Heart right ventricle (tissue), 16 donors: ENCODE measurements at regions of chr15 and their contacts with region 1.

Region 1: DNA sequence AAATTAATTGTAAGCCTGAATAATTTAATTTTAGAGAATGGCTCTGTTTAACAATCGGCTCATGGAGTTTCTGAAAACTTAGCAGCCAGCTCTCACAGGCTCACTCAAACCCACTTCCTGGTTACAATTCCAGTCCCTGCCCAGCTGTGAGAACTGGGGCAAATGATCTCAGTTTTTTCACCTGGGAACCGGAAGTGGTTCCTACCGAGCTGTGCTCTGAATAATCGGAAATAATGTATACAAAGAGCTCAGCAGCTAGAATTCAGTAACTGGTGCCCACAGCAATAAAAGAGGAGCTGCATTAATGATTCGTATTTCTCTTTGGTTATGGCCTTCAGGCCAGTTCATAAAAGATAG is 244.3 kb upstream of the MCTP2 start:
- DNase-seq: no peak
- ATAC-seq: no peak
- H3K4me3 ChIP-seq: no peak overlapping the region
- H3K27ac ChIP-seq: peak overlapping the region in 1 of 10 donors; percentile 40
- H3K4me1 ChIP-seq: peaks cover 0 to 22% (median 7%) of the 10 kb centered on the region in 9 donors
- H3K27me3 ChIP-seq: peaks cover 0 to 10% (median 0%) of the 10 kb centered on the region in 7 donors
- CTCF ChIP-seq: no peak

Region 2: DNA sequence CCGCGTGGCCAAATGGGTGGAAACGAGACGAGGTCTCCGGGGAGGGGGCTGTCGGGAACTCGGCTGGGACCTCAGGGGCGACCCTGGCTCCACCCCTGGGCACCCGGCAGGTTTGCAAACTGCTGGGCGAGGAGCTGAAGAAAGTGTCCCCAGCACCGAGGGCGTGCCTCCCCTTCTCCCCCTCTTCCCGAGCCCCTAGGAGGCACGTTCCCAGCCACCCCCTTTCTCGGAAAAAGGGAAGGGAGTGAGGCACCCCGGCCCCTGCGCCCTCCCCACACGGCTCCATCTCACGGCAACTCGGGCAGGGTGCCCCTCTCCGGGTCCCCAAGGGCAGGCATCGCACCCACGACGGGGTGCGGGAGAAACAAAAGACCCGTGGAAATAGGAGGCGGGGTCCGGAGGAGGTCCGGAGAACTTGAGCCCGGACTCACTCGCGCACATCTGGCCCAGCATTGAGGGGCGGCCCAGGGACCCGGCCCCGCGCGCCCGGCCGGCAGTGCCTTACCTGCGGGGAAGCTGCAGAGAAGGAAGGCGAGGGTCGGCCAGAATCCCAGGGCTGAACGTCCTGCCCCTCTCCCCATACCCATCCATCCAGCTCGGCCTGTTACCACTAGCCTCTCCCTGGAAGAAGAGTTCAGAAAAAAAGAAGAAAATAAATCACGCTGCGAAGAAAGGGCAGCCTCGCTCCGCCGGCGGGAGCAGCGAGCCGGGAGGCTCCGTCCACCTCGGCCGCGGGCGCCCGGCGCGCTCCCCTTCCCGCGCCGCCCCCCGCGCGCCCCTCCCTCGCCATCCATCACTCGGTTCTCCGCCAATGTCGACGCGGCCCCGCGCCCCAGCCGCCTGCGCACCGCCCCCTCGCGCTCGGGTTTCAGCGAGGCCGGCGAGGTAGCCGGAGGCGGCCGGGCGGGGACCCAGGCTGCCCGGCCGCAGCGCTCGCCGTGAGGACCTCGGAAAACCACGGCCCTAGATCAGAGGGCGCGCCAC is 914.4 kb before region 1 on chr15:
- intact Hi-C with region 1: loop called in 1 of 10 experiments (anchors 10 kb)
- DNase-seq: peak; percentile 83 to 88
- ATAC-seq: peak; percentile 79 to 94 (median 93)
- H3K4me3 ChIP-seq: peak overlapping the region; percentile 55 to 84 (median 72)
- H3K27ac ChIP-seq: peak overlapping the region; percentile 58 to 89 (median 82)
- H3K4me1 ChIP-seq: peaks cover 0 to 54% (median 19%) of the 10 kb centered on the region in 9 donors
- H3K27me3 ChIP-seq: peaks cover 0 to 55% (median 9%) of the 10 kb centered on the region in 7 donors
- CTCF ChIP-seq: peak in 5 of 9 donors; percentile 7 to 37 (median 12)

Region 3: GRCh38 chr15:93862791-93863190 is 124.3 kb before region 1 on chr15:
- intact Hi-C with region 1: loop called in 1 of 10 experiments (anchors 5 kb)
- DNase-seq: peak in 1 of 2 donors; percentile 20
- ATAC-seq: peak in 6 of 8 donors; percentile 18 to 67 (median 52)
- H3K4me3 ChIP-seq: peak overlapping the region in 1 of 10 donors; percentile 15
- H3K27ac ChIP-seq: peak overlapping the region in 5 of 10 donors; percentile 29 to 84 (median 49)
- H3K4me1 ChIP-seq: peaks cover 0 to 49% (median 0%) of the 10 kb centered on the region in 9 donors
- H3K27me3 ChIP-seq: no peaks in the 10 kb centered on the region
- CTCF ChIP-seq: no peak

Region 4: GRCh38 chr15:93942269-93942694 is 44.8 kb before region 1 on chr15:
- intact Hi-C with region 1: no loop called
- DNase-seq: no peak
- ATAC-seq: peak in 4 of 8 donors; percentile 30 to 73 (median 53)
- H3K4me3 ChIP-seq: no peak overlapping the region
- H3K27ac ChIP-seq: peak overlapping the region in 6 of 10 donors; percentile 38 to 66 (median 54)
- H3K4me1 ChIP-seq: peaks cover 0 to 8% (median 0%) of the 10 kb centered on the region in 9 donors
- H3K27me3 ChIP-seq: peaks cover 0 to 5% (median 0%) of the 10 kb centered on the region in 7 donors
- CTCF ChIP-seq: no peak

Region 5: GRCh38 chr15:93974804-93975481 is 12.1 kb before region 1 on chr15:
- intact Hi-C with region 1: no loop called
- DNase-seq: no peak
- ATAC-seq: peak in 4 of 8 donors; percentile 40 to 59 (median 50)
- H3K4me3 ChIP-seq: no peak overlapping the region
- H3K27ac ChIP-seq: no peak overlapping the region
- H3K4me1 ChIP-seq: peaks cover 0 to 3% (median 0%) of the 10 kb centered on the region in 9 donors
- H3K27me3 ChIP-seq: no peaks in the 10 kb centered on the region
- CTCF ChIP-seq: peak in 7 of 9 donors; percentile 7 to 56 (median 39)